ENCODE measurements at regions of chr15 and their contacts with region 1.

Region 1: DNA sequence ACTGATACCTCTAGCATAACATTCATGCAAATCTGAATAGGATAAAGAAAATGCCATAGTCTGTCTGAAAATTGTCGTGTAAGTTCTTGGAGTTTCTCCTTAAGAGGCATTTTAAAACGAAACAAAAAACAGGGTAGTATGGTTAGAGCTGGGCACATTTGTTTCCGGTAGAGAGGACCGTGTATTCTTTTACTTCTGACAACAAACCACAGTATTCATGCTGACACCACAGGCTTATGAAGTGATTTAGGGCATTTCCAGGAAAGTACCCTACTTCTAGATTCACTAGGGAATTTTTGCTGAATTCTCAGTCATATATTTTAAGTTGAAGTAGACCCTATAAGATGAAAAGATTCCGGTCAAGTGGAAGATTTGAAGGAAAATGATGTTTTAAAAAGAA is 541.3 kb downstream of the UNC13C start:
- DNase-seq: peak; percentile 52
- ATAC-seq: peak; percentile 74
- H3K4me3 ChIP-seq: no peak overlapping the region
- H3K27ac ChIP-seq: peak overlapping the region; percentile 22; the same call in 1 of the 2 replicates
- H3K4me1 ChIP-seq: no peaks in the 10 kb centered on the region
- H3K27me3 ChIP-seq: no peaks in the 10 kb centered on the region
- CTCF ChIP-seq: no peak
- EP300 ChIP-seq: peak; percentile 42 to 53; a peak in 2 of 4 replicates
- POLR2A ChIP-seq: no peak
- RAD21 ChIP-seq: no peak

Region 2: GRCh38 chr15:54082836-54083492 is 436.6 kb before region 1 on chr15:
- CTCF ChIA-PET with region 1: interaction called, 9 read pairs
- POLR2A ChIA-PET with region 1: interaction called, 3 read pairs
- RAD21 ChIA-PET with region 1: interaction called, 23 read pairs
- SMC1A ChIA-PET with region 1: interaction called, 8 read pairs
- in situ Hi-C with region 1: no loop called
- intact Hi-C with region 1: loop called (anchors 5 kb)
- DNase-seq: no peak
- ATAC-seq: peak; percentile 68
- H3K4me3 ChIP-seq: no peak overlapping the region
- H3K27ac ChIP-seq: no peak overlapping the region
- H3K4me1 ChIP-seq: no peaks in the 10 kb centered on the region
- H3K27me3 ChIP-seq: no peaks in the 10 kb centered on the region
- CTCF ChIP-seq: peak; percentile 56 to 80 (median 61)
- EP300 ChIP-seq: no peak
- POLR2A ChIP-seq: no peak
- RAD21 ChIP-seq: peak; percentile 72

Region 3: DNA sequence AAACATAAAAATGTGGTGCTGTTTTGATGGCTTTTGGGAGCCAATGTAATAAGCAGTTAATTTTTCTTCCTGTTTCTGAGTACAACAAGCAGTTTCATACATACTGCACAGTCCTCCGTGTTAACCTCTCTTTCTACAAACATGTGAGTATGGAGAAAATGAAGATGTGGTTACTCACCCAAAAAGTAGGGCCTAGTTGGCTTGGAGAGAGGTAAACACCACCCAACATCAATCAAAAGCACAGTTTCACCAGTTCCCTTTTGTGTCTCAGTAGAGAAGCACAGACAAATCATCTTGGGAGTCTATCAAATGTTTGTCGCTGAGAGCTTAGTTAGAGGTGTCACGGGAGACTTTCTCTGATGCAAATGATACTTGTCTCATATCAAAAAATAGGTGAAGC is 221.2 kb before region 1 on chr15:
- CTCF ChIA-PET with region 1: no interaction called
- POLR2A ChIA-PET with region 1: interaction called, 3 read pairs
- RAD21 ChIA-PET with region 1: interaction called, 7 read pairs
- SMC1A ChIA-PET with region 1: interaction called, 25 read pairs
- in situ Hi-C with region 1: no loop called
- intact Hi-C with region 1: no loop called
- DNase-seq: peak; percentile 32
- ATAC-seq: peak; percentile 94
- H3K4me3 ChIP-seq: no peak overlapping the region
- H3K27ac ChIP-seq: no peak overlapping the region
- H3K4me1 ChIP-seq: no peaks in the 10 kb centered on the region
- H3K27me3 ChIP-seq: no peaks in the 10 kb centered on the region
- CTCF ChIP-seq: no peak
- EP300 ChIP-seq: peak; percentile 80 to 88
- POLR2A ChIP-seq: no peak
- RAD21 ChIP-seq: no peak

Region 4: DNA sequence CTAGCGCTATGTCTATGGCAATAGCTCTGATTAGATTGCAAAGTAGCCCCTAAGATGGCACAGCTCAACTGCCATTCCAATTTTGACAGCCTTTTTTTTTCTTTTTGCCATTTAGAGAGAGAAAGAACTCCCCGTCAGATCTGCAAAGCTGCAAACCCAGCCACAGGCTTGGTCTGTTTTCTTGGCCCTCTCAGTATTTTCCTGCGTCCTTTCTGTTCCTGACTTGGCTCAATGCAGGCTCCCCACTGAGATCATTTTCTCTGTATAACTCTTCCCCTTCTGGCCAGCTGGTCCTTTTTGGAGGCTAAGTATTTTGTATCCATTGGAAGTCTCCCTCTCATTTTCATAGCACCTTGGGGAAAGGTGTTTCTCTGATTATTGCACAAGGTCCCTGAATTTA is 154.6 kb before region 1 on chr15:
- CTCF ChIA-PET with region 1: no interaction called
- POLR2A ChIA-PET with region 1: no interaction called
- RAD21 ChIA-PET with region 1: no interaction called
- SMC1A ChIA-PET with region 1: no interaction called
- in situ Hi-C with region 1: no loop called
- intact Hi-C with region 1: no loop called
- DNase-seq: no peak
- ATAC-seq: no peak
- H3K4me3 ChIP-seq: no peak overlapping the region
- H3K27ac ChIP-seq: no peak overlapping the region
- H3K4me1 ChIP-seq: no peaks in the 10 kb centered on the region
- H3K27me3 ChIP-seq: no peaks in the 10 kb centered on the region
- CTCF ChIP-seq: no peak
- EP300 ChIP-seq: no peak
- POLR2A ChIP-seq: no peak
- RAD21 ChIP-seq: no peak

Region 5: DNA sequence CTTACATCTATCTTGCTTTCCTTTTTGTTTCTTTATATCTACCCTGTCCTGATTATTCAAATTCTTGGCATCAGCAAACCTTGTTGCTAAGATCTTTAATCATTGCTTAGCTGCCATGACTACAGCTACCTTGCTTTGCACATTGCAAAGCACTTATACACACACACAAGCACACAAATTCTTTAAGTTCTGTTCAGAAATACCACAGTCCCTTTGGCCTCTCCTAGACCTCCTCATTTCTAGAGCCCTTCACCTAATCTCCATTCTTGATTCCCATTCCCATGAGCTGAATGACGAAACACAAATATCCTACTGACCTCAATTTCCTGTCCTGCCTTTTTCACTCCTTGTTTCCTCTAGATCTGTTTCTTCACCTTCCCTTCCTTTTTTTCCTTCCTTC is 131.8 kb before region 1 on chr15:
- CTCF ChIA-PET with region 1: no interaction called
- POLR2A ChIA-PET with region 1: no interaction called
- RAD21 ChIA-PET with region 1: interaction called, 3 read pairs
- SMC1A ChIA-PET with region 1: interaction called, 12 read pairs
- in situ Hi-C with region 1: no loop called
- intact Hi-C with region 1: no loop called
- DNase-seq: no peak
- ATAC-seq: peak; percentile 35; the same call in 1 of the 3 replicates
- H3K4me3 ChIP-seq: no peak overlapping the region
- H3K27ac ChIP-seq: no peak overlapping the region
- H3K4me1 ChIP-seq: no peaks in the 10 kb centered on the region
- H3K27me3 ChIP-seq: no peaks in the 10 kb centered on the region
- CTCF ChIP-seq: no peak
- EP300 ChIP-seq: no peak
- POLR2A ChIP-seq: no peak
- RAD21 ChIP-seq: no peak

Region 6: GRCh38 chr15:54502416-54503075 is 17.0 kb before region 1 on chr15:
- CTCF ChIA-PET with region 1: interaction called, 19 read pairs
- POLR2A ChIA-PET with region 1: interaction called, 9 read pairs
- RAD21 ChIA-PET with region 1: interaction called, 145 read pairs
- SMC1A ChIA-PET with region 1: interaction called, 51 read pairs
- in situ Hi-C with region 1: no loop called
- intact Hi-C with region 1: no loop called
- DNase-seq: no peak
- ATAC-seq: peak; percentile 44
- H3K4me3 ChIP-seq: no peak overlapping the region
- H3K27ac ChIP-seq: no peak overlapping the region
- H3K4me1 ChIP-seq: no peaks in the 10 kb centered on the region
- H3K27me3 ChIP-seq: no peaks in the 10 kb centered on the region
- CTCF ChIP-seq: no peak
- EP300 ChIP-seq: no peak
- POLR2A ChIP-seq: no peak
- RAD21 ChIP-seq: no peak

Region 7: GRCh38 chr15:54618120-54618519 is 98.5 kb after region 1 on chr15:
- CTCF ChIA-PET with region 1: no interaction called
- POLR2A ChIA-PET with region 1: interaction called, 3 read pairs
- RAD21 ChIA-PET with region 1: interaction called, 8 read pairs
- SMC1A ChIA-PET with region 1: interaction called, 11 read pairs
- in situ Hi-C with region 1: no loop called
- intact Hi-C with region 1: no loop called
- DNase-seq: no peak
- ATAC-seq: peak; percentile 14; the same call in 2 of the 3 replicates
- H3K4me3 ChIP-seq: no peak overlapping the region
- H3K27ac ChIP-seq: no peak overlapping the region
- H3K4me1 ChIP-seq: no peaks in the 10 kb centered on the region
- H3K27me3 ChIP-seq: no peaks in the 10 kb centered on the region
- CTCF ChIP-seq: no peak
- EP300 ChIP-seq: no peak
- POLR2A ChIP-seq: no peak
- RAD21 ChIP-seq: no peak

Region 8: DNA sequence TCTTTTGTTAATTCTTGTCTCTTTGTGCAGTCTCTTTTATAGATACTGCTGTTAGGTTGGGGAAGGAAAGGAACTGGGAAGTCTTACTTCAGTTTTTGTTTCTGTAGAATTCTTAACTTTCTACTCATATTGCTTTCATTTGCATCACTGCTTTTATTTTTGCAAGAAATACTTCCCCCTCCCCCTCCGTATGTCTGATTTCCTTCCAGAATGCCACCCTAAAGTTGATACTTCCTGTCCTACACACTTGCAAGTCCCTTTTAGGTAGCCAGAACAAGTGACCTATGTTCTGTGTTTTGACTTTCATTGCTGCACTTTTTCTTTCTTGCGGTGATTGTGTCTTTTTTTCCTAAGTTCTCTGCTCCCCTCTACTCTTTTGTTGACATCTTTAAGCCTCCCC is 199.7 kb after region 1 on chr15:
- CTCF ChIA-PET with region 1: no interaction called
- POLR2A ChIA-PET with region 1: no interaction called
- RAD21 ChIA-PET with region 1: no interaction called
- SMC1A ChIA-PET with region 1: no interaction called
- in situ Hi-C with region 1: no loop called
- intact Hi-C with region 1: no loop called
- DNase-seq: no peak
- ATAC-seq: no peak
- H3K4me3 ChIP-seq: no peak overlapping the region
- H3K27ac ChIP-seq: no peak overlapping the region
- H3K4me1 ChIP-seq: no peaks in the 10 kb centered on the region
- H3K27me3 ChIP-seq: no peaks in the 10 kb centered on the region
- CTCF ChIP-seq: no peak
- EP300 ChIP-seq: no peak
- POLR2A ChIP-seq: no peak
- RAD21 ChIP-seq: no peak

Measured in GM12878 (cell line).